PC-3 (cell line): ENCODE measurements at regions of chr14 and their contacts with region 1.

Region 1: DNA sequence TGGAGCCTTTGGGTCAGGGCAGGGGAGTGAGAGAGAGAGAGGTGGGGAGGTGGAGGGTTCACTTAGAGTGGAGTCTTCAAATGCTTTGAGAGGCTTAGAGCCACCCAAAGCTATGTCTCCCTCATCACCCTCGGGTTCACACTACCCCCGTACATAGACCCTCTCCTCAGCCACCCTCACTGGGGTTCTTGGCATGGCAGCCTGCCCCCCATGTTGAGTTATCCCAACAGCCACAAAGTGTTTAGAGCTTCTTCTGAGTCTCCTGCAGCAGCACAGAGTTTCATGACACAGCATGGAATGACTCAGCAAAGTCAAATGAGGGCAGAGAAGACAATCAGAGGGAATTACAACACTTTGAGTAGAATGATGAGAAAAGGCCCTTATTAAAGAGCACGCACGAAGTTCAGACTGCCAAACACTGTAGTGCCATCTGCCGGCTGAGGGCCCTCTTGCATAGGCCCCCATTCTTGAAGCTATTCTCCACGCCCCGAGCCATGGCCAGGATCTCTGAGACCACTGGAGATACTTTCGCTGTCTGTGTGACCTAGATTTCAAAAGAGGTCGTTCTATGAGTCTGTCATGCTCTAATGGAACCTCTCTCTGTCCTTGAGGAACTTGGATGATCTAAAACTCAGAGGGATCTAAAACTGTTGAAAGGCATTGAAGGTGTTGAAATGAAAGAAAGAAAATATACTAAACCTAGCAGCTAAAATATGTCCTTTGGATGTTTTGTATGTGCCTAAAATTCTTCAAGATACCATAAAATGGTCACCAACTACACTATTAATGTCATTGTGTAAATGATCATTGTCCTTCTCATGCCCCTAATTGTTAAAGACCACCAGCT is 221.9 kb downstream of the PELI2 start:
- DNase-seq: peak; percentile 89
- ATAC-seq: peak; percentile 96
- H3K4me3 ChIP-seq: no peak overlapping the region
- H3K27ac ChIP-seq: no peak overlapping the region
- H3K4me1 ChIP-seq: peaks cover 3% of the 10 kb centered on the region; the same call in 1 of the 2 replicates
- H3K27me3 ChIP-seq: peaks cover 19% of the 10 kb centered on the region; the same call in 1 of the 2 replicates
- CTCF ChIP-seq: peak; percentile 99

Region 2: DNA sequence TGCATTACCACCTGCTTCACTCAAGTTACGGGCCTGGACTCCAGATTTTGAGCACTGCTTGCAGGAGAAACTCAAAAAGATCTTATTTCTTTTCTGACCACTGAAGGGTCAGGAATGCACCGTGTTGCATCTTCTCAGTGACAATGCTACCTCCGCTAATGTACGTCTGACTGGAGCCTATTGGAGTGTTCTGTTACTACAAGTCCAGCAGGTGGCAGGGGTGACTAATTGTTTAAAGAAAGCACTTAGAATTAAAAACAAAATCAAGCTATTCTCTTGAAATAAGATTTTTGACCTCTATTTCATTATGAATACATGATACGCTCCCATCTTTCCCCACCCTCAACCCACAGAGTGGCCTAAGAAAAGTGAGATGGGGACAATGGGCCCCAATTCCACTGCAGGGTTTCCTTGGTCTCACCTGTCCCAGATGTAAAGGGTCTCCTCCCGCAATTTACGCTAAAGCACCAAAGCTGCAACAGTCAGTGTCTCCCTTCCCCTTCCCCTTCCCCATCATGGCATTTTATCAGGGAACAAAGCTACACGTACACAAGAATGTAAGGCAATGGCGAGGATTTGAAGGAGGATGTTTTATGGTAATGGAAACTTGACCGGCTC is 901.9 kb before region 1 on chr14:
- CTCF ChIA-PET with region 1: no interaction called
- POLR2A ChIA-PET with region 1: no interaction called
- intact Hi-C with region 1: loop called (anchors 1 kb)
- DNase-seq: peak; percentile 92
- ATAC-seq: peak; percentile 73
- H3K4me3 ChIP-seq: no peak overlapping the region
- H3K27ac ChIP-seq: no peak overlapping the region
- H3K4me1 ChIP-seq: peaks cover 21% of the 10 kb centered on the region
- H3K27me3 ChIP-seq: no peaks in the 10 kb centered on the region
- CTCF ChIP-seq: peak; percentile 99

Region 3: GRCh38 chr14:56247468-56248200 is 92.4 kb before region 1 on chr14:
- CTCF ChIA-PET with region 1: interaction called, 3 read pairs
- POLR2A ChIA-PET with region 1: no interaction called
- intact Hi-C with region 1: loop called (anchors 1 kb)
- DNase-seq: peak; percentile 74
- ATAC-seq: peak; percentile 46; the same call in 1 of the 2 replicates
- H3K4me3 ChIP-seq: no peak overlapping the region
- H3K27ac ChIP-seq: no peak overlapping the region
- H3K4me1 ChIP-seq: peaks cover 11% of the 10 kb centered on the region
- H3K27me3 ChIP-seq: peaks cover 40% of the 10 kb centered on the region
- CTCF ChIP-seq: peak; percentile 94

Region 4: GRCh38 chr14:56358851-56359614 is 19.0 kb after region 1 on chr14:
- CTCF ChIA-PET with region 1: no interaction called
- POLR2A ChIA-PET with region 1: interaction called, 19 read pairs
- intact Hi-C with region 1: no loop called
- DNase-seq: no peak
- ATAC-seq: no peak
- H3K4me3 ChIP-seq: no peak overlapping the region
- H3K27ac ChIP-seq: no peak overlapping the region
- H3K4me1 ChIP-seq: no peaks in the 10 kb centered on the region
- H3K27me3 ChIP-seq: peaks cover 53% of the 10 kb centered on the region
- CTCF ChIP-seq: no peak